Psoas muscle (tissue), 8 donors: ENCODE measurements at regions of chr19 and their contacts with region 1.

Region 1: GRCh38 chr19:11987405-11988281 is 22.8 kb downstream of the ZNF763 start:
- DNase-seq: peak; percentile 97
- ATAC-seq: peak; percentile 98 to 99 (median 99)
- H3K4me3 ChIP-seq: peak overlapping the region; percentile 79
- H3K27ac ChIP-seq: peak overlapping the region; percentile 84
- H3K4me1 ChIP-seq: no peaks in the 10 kb centered on the region
- H3K27me3 ChIP-seq: no peaks in the 10 kb centered on the region
- CTCF ChIP-seq: no peak

Region 2: DNA sequence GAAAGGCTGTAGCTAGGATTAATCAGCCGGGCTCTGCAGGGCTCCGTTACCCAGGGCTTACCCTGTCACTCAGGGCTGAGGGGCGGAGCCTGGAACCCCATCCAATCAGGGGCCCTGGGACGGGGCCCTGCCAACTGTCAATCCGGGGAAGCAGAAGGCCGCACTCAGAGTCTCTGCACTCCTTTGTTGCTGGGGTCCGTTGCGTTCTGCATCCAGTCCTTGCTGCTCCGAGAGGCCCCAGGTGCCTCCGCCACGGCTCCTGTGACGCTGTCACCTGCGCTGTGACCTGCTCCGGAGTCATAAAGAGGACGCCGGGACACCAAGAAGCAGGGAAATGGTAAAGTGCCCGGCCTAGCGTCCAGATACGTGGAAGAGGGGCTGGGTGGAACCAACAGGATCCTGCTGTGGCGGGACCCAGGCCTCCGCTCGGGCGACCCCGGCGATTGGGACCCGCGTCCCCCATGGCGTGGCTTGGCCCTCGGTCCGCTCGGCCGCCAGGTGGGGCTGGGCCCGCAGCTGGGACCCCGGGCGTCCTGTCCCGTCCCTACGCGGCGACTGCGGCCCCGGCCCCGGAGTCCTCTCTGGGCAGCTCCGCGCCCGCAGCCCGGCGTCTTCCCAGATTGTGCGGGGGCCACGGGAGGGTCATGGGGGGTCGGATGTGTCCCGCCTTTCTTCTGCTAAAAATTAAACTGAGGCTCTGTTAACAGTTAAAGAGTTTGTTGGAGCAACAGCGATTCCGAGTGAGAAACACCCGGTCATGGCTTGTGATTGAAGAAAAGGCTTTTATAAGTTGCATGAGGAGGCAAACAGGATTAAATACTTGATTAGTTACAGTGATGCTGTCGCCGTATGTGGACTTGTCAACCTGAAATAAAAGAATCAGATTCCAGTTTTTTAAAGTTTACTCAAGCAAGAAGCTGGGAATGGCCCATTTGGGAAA is 189.0 kb before region 1 on chr19 and contains the start of gene ZNF491:
- intact Hi-C with region 1: loop called (anchors 2 to 5 kb)
- DNase-seq: peak; percentile 91 to 94
- ATAC-seq: peak; percentile 98 to 99 (median 98)
- H3K4me3 ChIP-seq: peak within 1 kb of the TSS; percentile 93
- H3K27ac ChIP-seq: peak within 1 kb of the TSS; percentile 87
- H3K4me1 ChIP-seq: peaks cover 14% of the 10 kb centered on the region
- H3K27me3 ChIP-seq: no peaks in the 10 kb centered on the region
- CTCF ChIP-seq: peak; percentile 14
- total RNA-seq, gene ZNF491: 0.66 to 1.9 (median 1.1) TPM

Region 3: GRCh38 chr19:11881151-11881800 is 106.4 kb before region 1 on chr19:
- intact Hi-C with region 1: loop called (anchors 2 to 5 kb)
- DNase-seq: peak in 1 of 2 donors; percentile 16
- ATAC-seq: peak; percentile 57 to 89 (median 66)
- H3K4me3 ChIP-seq: no peak overlapping the region
- H3K27ac ChIP-seq: no peak overlapping the region
- H3K4me1 ChIP-seq: peaks cover 2% of the 10 kb centered on the region
- H3K27me3 ChIP-seq: no peaks in the 10 kb centered on the region
- CTCF ChIP-seq: peak; percentile 68

Region 4: GRCh38 chr19:11924886-11925650 is 62.6 kb before region 1 on chr19 and contains the start of gene ZNF700:
- intact Hi-C with region 1: loop called (anchors 1 to 2 kb)
- DNase-seq: peak; percentile 93 to 95
- ATAC-seq: peak; percentile 99 to 100 (median 99)
- H3K4me3 ChIP-seq: peak within 1 kb of the TSS; percentile 99
- H3K27ac ChIP-seq: peak within 1 kb of the TSS; percentile 95
- H3K4me1 ChIP-seq: peaks cover 5% of the 10 kb centered on the region
- H3K27me3 ChIP-seq: no peaks in the 10 kb centered on the region
- CTCF ChIP-seq: no peak
- total RNA-seq, gene ZNF700: 2.6 to 3.3 (median 3.1) TPM

Region 5: GRCh38 chr19:11964858-11965645 is 22.6 kb before region 1 on chr19 and contains the start of gene ZNF763:
- intact Hi-C with region 1: loop called in 1 of 2 experiments (anchors 2 kb)
- DNase-seq: peak; percentile 92 to 94
- ATAC-seq: peak; percentile 96 to 99 (median 98)
- H3K4me3 ChIP-seq: peak within 1 kb of the TSS; percentile 71
- H3K27ac ChIP-seq: peak within 1 kb of the TSS; percentile 63
- H3K4me1 ChIP-seq: peaks cover 10% of the 10 kb centered on the region
- H3K27me3 ChIP-seq: no peaks in the 10 kb centered on the region
- CTCF ChIP-seq: no peak
- total RNA-seq, gene ZNF763: 0.22 to 1.6 (median 0.81) TPM